Activated CD4-positive, alpha-beta memory T cell treated with anti-CD3 and anti-CD28 coated beads for 36 hours (primary cell): ENCODE measurements at regions of chr17 and their contacts with region 1.

Region 1: GRCh38 chr17:55053855-55054254 is 85.3 kb downstream of the STXBP4 start:
- DNase-seq: no peak
- H3K4me3 Mint-ChIP-seq: no peak overlapping the region
- H3K27ac Mint-ChIP-seq: no peak overlapping the region
- H3K4me1 Mint-ChIP-seq: no peaks in the 10 kb centered on the region
- H3K27me3 Mint-ChIP-seq: no peaks in the 10 kb centered on the region

Region 2: DNA sequence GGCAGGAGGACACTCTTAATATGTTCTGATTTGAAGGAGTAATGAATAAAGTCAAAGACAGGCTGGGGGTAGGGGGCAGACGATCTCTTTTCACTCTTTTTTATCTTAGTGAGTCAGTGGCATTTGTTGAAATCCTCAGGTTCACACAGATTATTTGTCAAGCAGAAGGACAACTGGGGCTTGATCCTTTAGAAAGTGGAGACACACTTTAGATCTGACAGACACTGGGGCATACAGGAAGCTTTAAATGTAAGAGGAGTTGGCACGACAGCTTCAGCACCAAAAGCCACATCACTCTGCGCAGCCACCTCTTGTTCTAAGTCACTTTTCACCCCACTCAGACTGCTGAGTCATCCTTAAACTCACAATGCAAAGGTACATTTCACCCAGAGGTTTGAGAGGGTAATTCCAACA is 36.2 kb after region 1 on chr17:
- CTCF ChIA-PET with region 1: no interaction called
- POLR2A ChIA-PET with region 1: no interaction called
- intact Hi-C with region 1: loop called (anchors 5 kb)
- DNase-seq: peak; percentile 76
- H3K4me3 Mint-ChIP-seq: no peak overlapping the region
- H3K27ac Mint-ChIP-seq: peak overlapping the region; percentile 80
- H3K4me1 Mint-ChIP-seq: peaks cover 26% of the 10 kb centered on the region
- H3K27me3 Mint-ChIP-seq: no peaks in the 10 kb centered on the region

Region 3: DNA sequence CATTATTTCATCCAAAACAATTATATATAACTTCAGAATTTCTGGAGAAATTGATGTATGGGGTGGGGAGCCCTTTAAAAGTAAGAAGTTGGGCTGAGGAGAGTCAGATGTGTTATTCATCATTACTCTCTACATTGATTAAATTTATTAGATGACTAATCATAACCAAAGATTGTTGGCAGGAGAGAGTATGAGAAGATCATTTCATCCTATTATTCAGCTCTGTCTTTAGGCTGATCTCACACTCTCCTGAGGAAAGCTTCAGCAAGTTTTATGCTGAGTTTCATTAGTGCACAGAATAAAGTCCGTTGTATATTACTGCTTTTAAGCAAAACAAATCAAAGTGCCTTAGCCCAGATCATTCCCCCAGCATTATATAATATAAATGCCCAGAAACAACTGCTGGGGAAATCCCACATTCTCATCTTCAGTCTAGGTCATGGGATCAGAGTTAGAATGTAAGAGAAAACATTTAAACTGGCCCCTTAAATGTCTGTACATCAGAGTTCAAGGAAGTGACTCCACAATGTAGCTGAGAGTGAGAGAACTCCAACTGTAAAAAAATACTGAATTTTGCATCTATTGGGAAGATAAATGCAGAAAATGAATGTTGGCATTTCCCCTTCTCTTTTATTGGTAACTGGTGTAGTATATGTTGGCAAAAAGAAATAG is 80.8 kb after region 1 on chr17:
- CTCF ChIA-PET with region 1: no interaction called
- POLR2A ChIA-PET with region 1: no interaction called
- intact Hi-C with region 1: no loop called
- DNase-seq: no peak
- H3K4me3 Mint-ChIP-seq: no peak overlapping the region
- H3K27ac Mint-ChIP-seq: no peak overlapping the region
- H3K4me1 Mint-ChIP-seq: no peaks in the 10 kb centered on the region
- H3K27me3 Mint-ChIP-seq: no peaks in the 10 kb centered on the region

Region 4: GRCh38 chr17:55295411-55296170 is 241.7 kb after region 1 on chr17:
- CTCF ChIA-PET with region 1: interaction called, 5 read pairs
- POLR2A ChIA-PET with region 1: no interaction called
- intact Hi-C with region 1: loop called (anchors 5 kb)
- DNase-seq: peak; percentile 72
- H3K4me3 Mint-ChIP-seq: no peak overlapping the region
- H3K27ac Mint-ChIP-seq: no peak overlapping the region
- H3K4me1 Mint-ChIP-seq: peaks cover under 1% of the 10 kb centered on the region
- H3K27me3 Mint-ChIP-seq: no peaks in the 10 kb centered on the region